Breast epithelium (tissue), 4 donors: ENCODE measurements at regions of chr3 and their contacts with region 1.

Region 1: GRCh38 chr3:105944721-105945120 is 75.9 kb upstream of the CBLB start:
- DNase-seq: no peak
- H3K4me3 ChIP-seq: no peak overlapping the region
- H3K27ac ChIP-seq: no peak overlapping the region
- H3K4me1 ChIP-seq: no peaks in the 10 kb centered on the region
- H3K27me3 ChIP-seq: no peaks in the 10 kb centered on the region
- CTCF ChIP-seq: no peak
- POLR2A ChIP-seq: no peak

Region 2: DNA sequence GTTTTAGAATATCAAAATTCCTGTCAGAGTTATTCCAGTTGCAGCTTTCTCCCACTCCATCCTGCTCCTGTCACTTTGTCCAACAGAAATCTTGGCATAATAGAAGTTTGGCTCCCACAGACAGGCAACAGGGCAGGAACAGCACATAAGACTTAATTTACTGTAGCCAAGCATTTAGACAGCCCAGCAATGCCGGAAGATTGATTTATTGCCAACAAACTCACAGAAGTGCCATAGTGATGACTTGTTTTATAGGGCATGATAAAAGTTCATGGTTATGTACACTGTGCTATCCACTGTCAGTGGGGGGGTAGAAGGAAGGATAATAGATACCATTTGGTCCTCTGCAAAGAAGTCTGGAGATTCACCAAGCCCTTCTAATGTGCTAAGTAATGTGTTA is 22.4 kb after region 1 on chr3:
- intact Hi-C with region 1: loop called (anchors 2 kb)
- DNase-seq: no peak
- H3K4me3 ChIP-seq: no peak overlapping the region
- H3K27ac ChIP-seq: no peak overlapping the region
- H3K4me1 ChIP-seq: no peaks in the 10 kb centered on the region
- H3K27me3 ChIP-seq: no peaks in the 10 kb centered on the region
- CTCF ChIP-seq: no peak
- POLR2A ChIP-seq: no peak

Region 3: DNA sequence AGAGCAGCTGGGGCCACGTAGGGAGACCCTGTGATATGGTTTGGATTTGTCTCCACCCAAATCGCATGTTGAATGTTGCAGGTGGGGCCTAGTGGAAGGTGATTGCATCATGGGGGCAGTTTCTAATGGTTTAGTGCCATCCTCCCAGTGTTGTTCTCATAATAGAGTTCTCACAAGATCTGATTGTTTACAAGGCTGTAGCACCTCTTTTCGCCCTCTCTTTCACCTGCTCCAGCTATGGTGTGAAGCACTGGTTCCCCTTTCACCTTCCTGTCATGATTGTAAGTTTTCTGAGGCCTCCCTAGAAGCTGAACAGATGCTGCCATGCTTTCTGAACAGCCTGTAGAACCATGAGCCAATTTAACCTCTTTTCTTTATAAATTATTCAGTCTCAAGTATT is 123.0 kb after region 1 on chr3:
- intact Hi-C with region 1: no loop called
- DNase-seq: no peak
- H3K4me3 ChIP-seq: no peak overlapping the region
- H3K27ac ChIP-seq: no peak overlapping the region
- H3K4me1 ChIP-seq: no peaks in the 10 kb centered on the region
- H3K27me3 ChIP-seq: no peaks in the 10 kb centered on the region
- CTCF ChIP-seq: no peak
- POLR2A ChIP-seq: no peak